AG04449 (cell line): ENCODE measurements at regions of chr6 and their contacts with region 1.

Region 1: DNA sequence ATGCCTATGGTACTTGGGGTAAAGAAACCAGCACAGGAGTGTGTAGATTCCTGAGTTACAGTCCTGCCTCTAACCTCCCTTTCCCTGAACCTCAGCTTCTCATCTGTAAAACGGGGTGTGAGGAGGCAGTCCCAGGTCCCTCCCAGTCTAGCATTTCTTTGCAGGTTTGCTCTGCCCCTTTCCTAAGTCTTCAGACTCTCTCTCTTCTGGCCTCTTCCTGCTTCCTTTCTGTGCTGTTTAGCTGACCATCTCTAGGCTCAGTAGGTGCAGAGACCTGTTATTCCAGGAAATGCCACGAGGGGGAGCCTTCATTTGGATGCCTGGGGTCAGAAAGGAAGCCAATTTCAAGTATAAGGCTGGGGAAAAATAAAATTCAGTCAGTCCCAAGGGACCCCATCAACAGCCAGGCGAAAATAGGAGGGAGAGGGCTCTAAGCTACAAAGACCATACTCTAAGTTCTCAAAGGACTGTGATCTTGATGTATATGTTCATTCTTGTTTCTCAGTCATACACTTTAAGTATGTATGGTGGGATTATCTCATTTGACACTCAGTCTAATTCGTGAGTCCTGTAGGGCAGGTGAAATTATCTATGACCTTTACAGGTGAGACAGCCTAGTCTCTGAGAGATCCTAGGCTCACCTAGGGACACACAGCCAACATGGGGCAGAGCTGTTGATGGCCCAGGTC is 89.1 kb downstream of the NCR2 start:
- DNase-seq: peak; percentile 19
- H3K4me3 ChIP-seq: no peak overlapping the region
- CTCF ChIP-seq: peak; percentile 85

Region 2: GRCh38 chr6:41413250-41413649 is 11.3 kb before region 1 on chr6:
- CTCF ChIA-PET with region 1: interaction called, 59 read pairs
- POLR2A ChIA-PET with region 1: no interaction called
- DNase-seq: no peak
- H3K4me3 ChIP-seq: no peak overlapping the region
- CTCF ChIP-seq: no peak

Region 3: GRCh38 chr6:41449399-41450245 is 25.1 kb after region 1 on chr6:
- CTCF ChIA-PET with region 1: interaction called, 37 read pairs
- POLR2A ChIA-PET with region 1: no interaction called
- DNase-seq: no peak
- H3K4me3 ChIP-seq: no peak overlapping the region
- CTCF ChIP-seq: no peak

Region 4: GRCh38 chr6:41571021-41571780 is 146.7 kb after region 1 on chr6:
- CTCF ChIA-PET with region 1: interaction called, 12 read pairs
- POLR2A ChIA-PET with region 1: no interaction called
- DNase-seq: no peak
- H3K4me3 ChIP-seq: no peak overlapping the region
- CTCF ChIP-seq: no peak

Region 5: GRCh38 chr6:41591859-41592502 is 167.5 kb after region 1 on chr6:
- CTCF ChIA-PET with region 1: interaction called, 146 read pairs
- POLR2A ChIA-PET with region 1: no interaction called
- DNase-seq: no peak
- H3K4me3 ChIP-seq: no peak overlapping the region
- CTCF ChIP-seq: peak; percentile 86